Activated CD4-positive, alpha-beta memory T cell treated with anti-CD3 and anti-CD28 coated beads, Interleukin-2, amount 10 ng/mL, durations not matched to agents 7 days and 5 days (primary cell): ENCODE measurements at regions of chr17 and their contacts with region 1.

Region 1: GRCh38 chr17:75405365-75406221 is at the start of gene GRB2:
- DNase-seq: peak; percentile 100
- H3K4me3 Mint-ChIP-seq: peak within 1 kb of the TSS; percentile 95
- H3K27ac Mint-ChIP-seq: peak within 1 kb of the TSS; percentile 96
- H3K4me1 Mint-ChIP-seq: peaks cover 47% of the 10 kb centered on the region
- H3K27me3 Mint-ChIP-seq: no peaks in the 10 kb centered on the region
- total RNA-seq, gene GRB2: 130 to 132 TPM

Region 2: GRCh38 chr17:75077496-75078283 is 327.9 kb before region 1 on chr17:
- CTCF ChIA-PET with region 1: no interaction called
- POLR2A ChIA-PET with region 1: no interaction called
- DNase-seq: peak; percentile 66
- H3K4me3 Mint-ChIP-seq: peak overlapping the region; percentile 50
- H3K27ac Mint-ChIP-seq: peak overlapping the region; percentile 52
- H3K4me1 Mint-ChIP-seq: peaks cover 29% of the 10 kb centered on the region
- H3K27me3 Mint-ChIP-seq: no peaks in the 10 kb centered on the region

Region 3: DNA sequence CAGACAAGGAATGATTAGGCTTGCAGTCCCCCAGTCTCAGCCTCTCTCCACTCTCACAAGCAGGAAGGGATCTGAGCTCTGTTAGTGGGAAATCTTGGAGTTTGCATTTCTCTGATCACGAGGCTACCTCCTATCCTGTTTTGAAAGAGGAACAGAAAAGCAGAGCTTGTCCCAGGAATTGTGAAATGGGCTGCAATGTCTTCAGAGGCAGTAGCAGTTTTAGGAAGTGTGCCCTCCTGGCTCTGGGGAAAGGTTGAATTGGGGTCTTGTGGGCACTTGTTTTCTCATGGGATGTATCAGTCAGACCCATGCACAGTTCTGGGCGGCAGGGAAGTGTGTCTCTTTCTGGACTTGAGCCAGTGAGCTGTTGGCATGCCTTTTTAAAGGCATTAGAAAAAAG is 177.3 kb before region 1 on chr17:
- CTCF ChIA-PET with region 1: no interaction called
- POLR2A ChIA-PET with region 1: no interaction called
- DNase-seq: no peak
- H3K4me3 Mint-ChIP-seq: no peak overlapping the region
- H3K27ac Mint-ChIP-seq: no peak overlapping the region
- H3K4me1 Mint-ChIP-seq: no peaks in the 10 kb centered on the region
- H3K27me3 Mint-ChIP-seq: no peaks in the 10 kb centered on the region

Region 4: GRCh38 chr17:75271233-75271954 is 134.2 kb before region 1 on chr17:
- CTCF ChIA-PET with region 1: interaction called, 16 read pairs
- POLR2A ChIA-PET with region 1: interaction called, 22 read pairs
- DNase-seq: peak; percentile 92
- H3K4me3 Mint-ChIP-seq: peak overlapping the region; percentile 85
- H3K27ac Mint-ChIP-seq: peak overlapping the region; percentile 89
- H3K4me1 Mint-ChIP-seq: peaks cover 47% of the 10 kb centered on the region
- H3K27me3 Mint-ChIP-seq: no peaks in the 10 kb centered on the region

Region 5: DNA sequence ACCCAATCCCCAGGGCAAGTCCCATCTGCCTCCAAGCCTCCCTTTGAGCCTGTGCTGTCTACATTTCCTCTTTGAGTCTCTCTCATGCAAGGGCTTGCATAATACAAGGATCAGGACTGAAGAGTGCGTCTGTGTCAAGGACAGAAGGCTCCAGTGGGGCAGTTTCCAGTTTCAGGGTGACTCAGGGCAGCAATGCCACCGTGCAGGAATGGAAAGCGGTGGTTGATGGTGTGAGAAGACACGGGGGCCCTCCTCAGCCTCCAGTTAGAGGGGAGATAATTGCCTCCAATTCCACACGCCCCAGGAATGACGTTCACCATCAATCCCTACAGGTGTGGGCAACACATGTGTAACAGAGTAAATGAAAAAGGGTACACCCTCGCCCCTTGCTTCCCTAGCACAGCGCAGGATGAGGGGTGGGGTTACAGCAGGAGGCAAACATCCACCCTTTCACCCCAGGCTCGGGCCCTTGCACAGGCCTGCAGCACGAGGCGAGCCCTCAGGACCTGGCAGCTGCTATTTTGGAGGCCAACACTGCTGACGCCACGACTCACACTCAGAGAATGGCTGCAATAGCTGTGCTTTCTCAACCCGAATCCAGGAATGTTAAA is 91.5 kb before region 1 on chr17:
- CTCF ChIA-PET with region 1: no interaction called
- POLR2A ChIA-PET with region 1: interaction called, 11 read pairs
- DNase-seq: no peak
- H3K4me3 Mint-ChIP-seq: no peak overlapping the region
- H3K27ac Mint-ChIP-seq: no peak overlapping the region
- H3K4me1 Mint-ChIP-seq: peaks cover 35% of the 10 kb centered on the region
- H3K27me3 Mint-ChIP-seq: no peaks in the 10 kb centered on the region

Region 6: GRCh38 chr17:75338335-75338734 is 67.3 kb before region 1 on chr17:
- CTCF ChIA-PET with region 1: interaction called, 4 read pairs
- POLR2A ChIA-PET with region 1: interaction called, 12 read pairs
- DNase-seq: no peak
- H3K4me3 Mint-ChIP-seq: peak overlapping the region; percentile 38
- H3K27ac Mint-ChIP-seq: peak overlapping the region; percentile 80
- H3K4me1 Mint-ChIP-seq: peaks cover 57% of the 10 kb centered on the region
- H3K27me3 Mint-ChIP-seq: no peaks in the 10 kb centered on the region

Region 7: DNA sequence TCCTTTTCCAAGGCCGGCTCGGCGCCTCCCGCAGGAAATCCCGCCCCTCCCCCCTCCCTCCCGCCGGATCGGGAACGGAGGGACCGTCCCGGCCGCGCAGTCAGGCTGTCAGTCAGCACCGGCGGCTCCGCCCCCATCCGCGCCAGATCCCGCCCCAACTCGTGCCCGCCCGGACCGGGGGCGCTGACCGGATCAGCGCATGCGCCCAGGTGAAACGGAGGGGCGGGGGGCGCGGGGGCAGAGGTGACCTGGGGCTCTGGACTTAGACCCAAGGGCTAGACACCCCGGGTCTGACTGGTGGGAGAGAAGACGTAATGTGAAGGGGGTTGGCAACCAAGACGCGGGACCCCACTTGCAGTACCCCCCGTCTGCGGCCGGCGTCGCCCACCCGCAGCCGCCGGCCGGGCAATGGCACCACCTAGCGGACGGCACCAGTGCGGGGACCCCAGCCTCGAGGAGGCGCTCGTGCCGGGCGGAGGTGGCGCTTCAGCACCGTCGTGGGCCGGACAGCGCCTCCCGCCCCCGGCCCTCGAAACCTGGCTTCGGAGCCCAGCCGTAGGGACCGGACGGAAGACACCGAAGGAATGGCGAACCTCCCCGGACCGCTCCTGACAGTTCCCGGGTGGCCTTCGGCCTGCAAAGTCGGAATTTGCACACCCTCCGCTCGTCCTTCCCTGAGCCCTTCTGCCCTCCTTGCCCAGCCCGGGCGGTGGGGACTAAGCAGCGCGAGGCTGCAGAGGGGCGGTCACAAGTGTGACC is 110.1 kb after region 1 on chr17 and contains the start of gene CASKIN2:
- CTCF ChIA-PET with region 1: interaction called, 7 read pairs
- POLR2A ChIA-PET with region 1: interaction called, 16 read pairs
- DNase-seq: peak; percentile 82
- H3K4me3 Mint-ChIP-seq: peak within 1 kb of the TSS; percentile 65
- H3K27ac Mint-ChIP-seq: no peak within 1 kb of the TSS
- H3K4me1 Mint-ChIP-seq: peaks cover 30% of the 10 kb centered on the region
- H3K27me3 Mint-ChIP-seq: peaks cover 3% of the 10 kb centered on the region
- total RNA-seq, gene CASKIN2: 1.5 to 1.9 TPM